ENCODE measurements at regions of chr6 and their contacts with region 1.

Region 1: DNA sequence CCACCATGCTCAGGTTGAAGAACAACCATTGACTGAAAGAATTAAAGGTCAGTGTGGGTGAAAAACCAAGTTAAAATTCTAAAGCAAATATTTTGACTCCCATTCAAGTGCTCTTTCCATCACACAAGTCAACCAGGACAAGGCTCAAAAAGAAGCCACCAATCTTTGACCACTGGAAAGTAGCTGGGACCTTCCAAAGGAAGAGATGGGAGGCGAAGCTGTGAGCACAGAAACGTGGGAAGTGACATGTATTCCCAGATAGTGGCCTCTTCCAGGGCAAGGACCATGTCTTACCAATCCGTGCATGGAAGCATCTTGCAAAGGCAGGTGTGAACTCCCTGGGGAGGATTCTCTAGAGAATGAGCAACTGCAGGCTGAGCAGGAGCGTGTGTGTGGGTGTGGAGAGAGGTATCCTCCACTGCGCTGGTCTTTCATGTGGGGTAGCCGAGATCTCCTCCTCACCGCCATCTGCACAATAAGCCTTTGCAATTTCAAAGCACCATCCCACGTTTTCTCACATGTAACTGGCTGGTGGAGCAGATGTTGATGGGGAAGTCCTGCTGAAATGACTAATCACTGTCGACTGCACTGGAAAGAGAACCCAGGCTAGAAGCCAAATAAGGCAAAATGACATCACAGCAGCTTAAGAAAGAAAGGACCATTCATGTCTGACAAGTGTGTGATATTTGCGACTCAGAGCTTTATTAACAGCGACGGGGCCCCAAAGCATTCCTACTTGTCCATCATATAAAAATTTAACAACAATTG is 189.4 kb upstream of the RREB1 start:
- DNase-seq: peak; percentile 89
- H3K4me3 Mint-ChIP-seq: no peak overlapping the region
- H3K27ac Mint-ChIP-seq: peak overlapping the region; percentile 18
- H3K4me1 Mint-ChIP-seq: peaks cover 17% of the 10 kb centered on the region
- H3K27me3 Mint-ChIP-seq: peaks cover 26% of the 10 kb centered on the region

Region 2: GRCh38 chr6:6659600-6660327 is 258.6 kb before region 1 on chr6:
- CTCF ChIA-PET with region 1: no interaction called
- POLR2A ChIA-PET with region 1: no interaction called
- intact Hi-C with region 1: loop called (anchors 1 kb)
- DNase-seq: no peak
- H3K4me3 Mint-ChIP-seq: no peak overlapping the region
- H3K27ac Mint-ChIP-seq: peak overlapping the region; percentile 89
- H3K4me1 Mint-ChIP-seq: peaks cover 54% of the 10 kb centered on the region
- H3K27me3 Mint-ChIP-seq: peaks cover 2% of the 10 kb centered on the region

Region 3: DNA sequence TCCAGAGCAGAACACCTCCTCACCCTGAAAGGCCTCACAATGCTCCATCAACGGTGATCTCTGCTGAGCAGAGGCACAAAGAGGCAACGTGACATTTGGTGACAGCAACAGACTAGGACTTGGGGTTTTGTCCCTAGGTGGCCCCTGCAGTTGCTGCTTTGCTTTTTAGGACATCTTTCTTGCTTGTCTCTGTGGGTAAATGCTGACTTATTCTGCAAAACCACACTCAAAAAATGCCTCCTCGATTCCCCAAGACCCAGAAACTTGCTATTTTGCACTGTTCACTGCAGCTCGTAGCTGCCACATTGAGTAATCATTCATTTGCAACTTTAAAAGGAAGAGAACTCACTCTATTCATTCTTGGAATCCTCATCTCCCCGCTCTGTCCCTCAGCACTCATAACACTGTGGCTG is 119.9 kb before region 1 on chr6:
- CTCF ChIA-PET with region 1: no interaction called
- POLR2A ChIA-PET with region 1: no interaction called
- intact Hi-C with region 1: loop called (anchors 1 kb)
- DNase-seq: peak; percentile 68
- H3K4me3 Mint-ChIP-seq: no peak overlapping the region
- H3K27ac Mint-ChIP-seq: peak overlapping the region; percentile 78
- H3K4me1 Mint-ChIP-seq: peaks cover 40% of the 10 kb centered on the region
- H3K27me3 Mint-ChIP-seq: peaks cover 6% of the 10 kb centered on the region

Region 4: GRCh38 chr6:6856538-6857523 is 61.6 kb before region 1 on chr6:
- CTCF ChIA-PET with region 1: no interaction called
- POLR2A ChIA-PET with region 1: no interaction called
- intact Hi-C with region 1: loop called (anchors 1 kb)
- DNase-seq: peak; percentile 82
- H3K4me3 Mint-ChIP-seq: peak overlapping the region; percentile 57
- H3K27ac Mint-ChIP-seq: peak overlapping the region; percentile 80
- H3K4me1 Mint-ChIP-seq: peaks cover 28% of the 10 kb centered on the region
- H3K27me3 Mint-ChIP-seq: no peaks in the 10 kb centered on the region

Region 5: DNA sequence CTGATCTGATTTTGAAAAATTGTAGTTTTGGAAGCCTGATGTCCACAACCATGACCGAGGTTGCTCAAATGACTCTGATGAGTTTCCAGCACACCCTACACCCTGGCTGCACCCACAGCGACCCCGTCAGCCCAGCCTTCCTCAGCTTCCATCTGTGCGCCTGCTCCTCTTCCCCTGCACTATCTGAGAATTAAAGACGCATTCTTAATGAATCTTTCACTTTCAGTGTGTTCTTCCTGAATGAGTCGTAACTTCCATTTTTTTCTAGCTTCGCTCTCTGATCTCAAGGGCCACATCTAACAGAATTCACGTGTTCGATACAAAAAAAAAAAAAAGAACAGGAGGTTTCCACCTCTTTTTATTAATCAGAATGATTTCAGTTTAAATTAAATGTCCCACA is 168.1 kb after region 1 on chr6:
- CTCF ChIA-PET with region 1: interaction called, 3 read pairs
- POLR2A ChIA-PET with region 1: no interaction called
- intact Hi-C with region 1: loop called (anchors 2 kb)
- DNase-seq: peak; percentile 57
- H3K4me3 Mint-ChIP-seq: peak overlapping the region; percentile 21
- H3K27ac Mint-ChIP-seq: no peak overlapping the region
- H3K4me1 Mint-ChIP-seq: peaks cover 28% of the 10 kb centered on the region
- H3K27me3 Mint-ChIP-seq: peaks cover 5% of the 10 kb centered on the region

Region 6: DNA sequence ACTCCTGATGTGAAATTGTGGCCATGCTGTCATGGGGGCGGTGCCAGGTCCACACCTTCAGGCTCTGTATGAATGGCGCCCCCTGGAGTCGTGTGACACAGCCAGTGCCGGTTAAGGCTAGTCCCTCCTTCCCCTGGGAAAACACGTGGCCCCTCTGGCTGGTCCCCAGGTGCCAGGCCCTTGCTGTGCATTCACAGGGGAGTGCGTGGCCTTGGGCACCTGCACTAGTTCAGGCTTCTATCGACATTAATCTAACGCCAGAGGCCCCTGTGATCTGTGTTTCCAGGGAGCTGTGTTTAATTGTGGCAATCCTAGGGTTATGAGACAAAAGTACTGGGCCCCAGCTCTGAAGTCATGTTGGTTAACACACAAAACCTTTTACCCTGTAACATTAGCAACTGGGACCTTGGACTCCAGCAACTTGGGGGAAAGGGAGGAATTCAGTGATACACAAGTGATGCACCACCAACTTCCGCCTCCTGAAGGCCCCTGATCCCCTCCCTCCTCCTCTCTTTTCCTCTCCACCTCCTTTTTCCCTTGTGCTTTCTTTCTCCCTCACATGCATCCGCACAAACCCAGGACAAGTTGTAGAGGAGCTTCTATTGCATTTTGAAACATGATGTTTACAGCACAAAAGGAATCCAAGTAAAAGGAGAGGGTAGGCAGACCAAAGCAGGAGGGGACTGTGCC is 320.6 kb after region 1 on chr6:
- CTCF ChIA-PET with region 1: no interaction called
- POLR2A ChIA-PET with region 1: no interaction called
- intact Hi-C with region 1: loop called (anchors 5 kb)
- DNase-seq: peak; percentile 86
- H3K4me3 Mint-ChIP-seq: no peak overlapping the region
- H3K27ac Mint-ChIP-seq: no peak overlapping the region
- H3K4me1 Mint-ChIP-seq: peaks cover 20% of the 10 kb centered on the region
- H3K27me3 Mint-ChIP-seq: no peaks in the 10 kb centered on the region

Measured in activated CD4-positive, alpha-beta memory T cell treated with anti-CD3 and anti-CD28 coated beads for 36 hours (primary cell).